RWPE1 (cell line): ENCODE measurements at regions of chr16 and their contacts with region 1.

Region 1: DNA sequence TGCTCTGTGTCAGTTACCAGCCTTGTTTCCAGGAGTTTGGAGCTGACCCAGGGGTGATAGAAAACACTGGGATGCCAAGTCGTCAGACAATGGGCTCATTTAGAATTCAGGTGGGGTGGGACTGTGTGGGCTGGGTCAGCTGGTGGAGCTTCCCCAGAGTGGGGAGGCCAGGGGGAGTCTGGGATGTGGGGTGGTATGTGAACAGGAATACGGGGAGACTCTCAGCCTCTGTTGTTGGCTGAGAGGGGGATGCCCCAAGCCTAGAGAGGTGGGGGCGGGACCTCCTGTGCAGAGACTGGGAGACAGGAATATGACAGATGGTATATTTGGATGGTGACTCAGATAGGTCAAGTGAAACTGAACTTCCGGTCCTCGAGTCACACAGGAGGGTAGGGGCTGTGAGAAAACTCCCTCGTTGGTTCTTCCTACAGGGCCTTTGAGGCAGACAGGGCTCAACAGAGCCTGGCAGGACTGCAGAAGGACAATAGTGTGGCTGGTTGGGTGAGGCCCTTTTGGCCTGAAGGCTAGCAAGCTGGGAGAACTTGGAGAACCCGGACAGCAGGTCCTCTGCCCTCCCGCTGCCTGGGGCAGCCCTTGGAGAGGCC is 23.7 kb downstream of the CDH1 start:
- DNase-seq: peak; percentile 87
- H3K27ac ChIP-seq: peak overlapping the region; percentile 45
- CTCF ChIP-seq: no peak

Region 2: GRCh38 chr16:68146585-68146984 is 614.2 kb before region 1 on chr16:
- CTCF ChIA-PET with region 1: no interaction called
- POLR2A ChIA-PET with region 1: interaction called, 10 read pairs
- DNase-seq: no peak
- H3K27ac ChIP-seq: no peak overlapping the region
- CTCF ChIP-seq: no peak